ENCODE measurements at regions of chr7 and their contacts with region 1.

Region 1: GRCh38 chr7:120709972-120710320 is 148.0 kb downstream of the TSPAN12 start:
- DNase-seq: no peak
- ATAC-seq: no peak
- H3K4me3 ChIP-seq: no peak overlapping the region
- H3K27ac ChIP-seq: no peak overlapping the region
- H3K4me1 ChIP-seq: no peaks in the 10 kb centered on the region
- H3K27me3 ChIP-seq: no peaks in the 10 kb centered on the region
- CTCF ChIP-seq: no peak
- EP300 ChIP-seq: no peak
- POLR2A ChIP-seq: no peak
- RAD21 ChIP-seq: no peak

Region 2: DNA sequence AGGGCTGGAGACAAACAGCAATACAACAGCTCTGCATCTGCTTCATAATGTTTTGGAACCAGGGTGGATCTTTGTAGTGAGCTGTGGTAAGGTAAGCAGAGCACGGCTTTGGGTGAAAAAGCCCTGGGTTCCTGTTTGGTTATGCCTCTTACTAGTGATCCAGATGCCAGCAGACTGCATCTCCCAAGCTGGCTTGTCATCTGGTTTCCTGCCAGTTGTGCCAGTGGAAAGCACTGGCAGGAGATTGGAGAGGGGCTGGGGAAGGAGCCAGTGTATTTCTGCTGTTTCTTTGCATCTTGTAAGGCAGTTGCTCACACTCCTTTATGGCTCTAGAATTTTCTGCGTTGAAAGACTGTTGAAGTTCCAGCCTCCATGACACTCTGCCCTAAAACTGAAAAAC is 10.4 kb after region 1 on chr7:
- CTCF ChIA-PET with region 1: interaction called, 29 read pairs
- POLR2A ChIA-PET with region 1: no interaction called
- RAD21 ChIA-PET with region 1: interaction called, 3 read pairs
- SMC1A ChIA-PET with region 1: interaction called, 37 read pairs
- in situ Hi-C with region 1: no loop called
- intact Hi-C with region 1: no loop called
- DNase-seq: no peak
- ATAC-seq: no peak; the same call in 2 of the 3 replicates
- H3K4me3 ChIP-seq: no peak overlapping the region
- H3K27ac ChIP-seq: no peak overlapping the region
- H3K4me1 ChIP-seq: no peaks in the 10 kb centered on the region; the same call in 1 of the 2 replicates
- H3K27me3 ChIP-seq: no peaks in the 10 kb centered on the region
- CTCF ChIP-seq: no peak
- EP300 ChIP-seq: no peak
- POLR2A ChIP-seq: no peak
- RAD21 ChIP-seq: no peak

Region 3: DNA sequence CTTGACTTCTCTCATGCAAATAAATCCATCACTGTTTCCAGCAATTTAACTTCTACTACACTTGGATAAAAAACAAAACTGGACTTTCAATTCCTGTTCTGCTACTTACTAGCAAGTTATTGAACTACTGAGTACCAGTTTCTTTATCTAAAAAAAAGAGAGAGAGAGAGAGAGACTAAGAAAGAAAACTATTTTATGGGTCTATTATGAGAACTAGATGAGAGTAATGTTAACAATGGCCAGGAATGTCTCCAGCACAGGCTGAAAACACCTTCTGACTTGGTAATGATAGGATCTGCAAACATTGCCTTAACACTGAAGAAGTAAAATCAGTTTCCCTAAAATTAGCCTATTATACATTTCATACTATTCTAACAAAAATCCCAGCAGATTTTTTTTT is 142.8 kb after region 1 on chr7:
- CTCF ChIA-PET with region 1: no interaction called
- POLR2A ChIA-PET with region 1: no interaction called
- RAD21 ChIA-PET with region 1: no interaction called
- SMC1A ChIA-PET with region 1: no interaction called
- in situ Hi-C with region 1: no loop called
- intact Hi-C with region 1: no loop called
- DNase-seq: no peak
- ATAC-seq: no peak
- H3K4me3 ChIP-seq: no peak overlapping the region
- H3K27ac ChIP-seq: no peak overlapping the region
- H3K4me1 ChIP-seq: no peaks in the 10 kb centered on the region
- H3K27me3 ChIP-seq: no peaks in the 10 kb centered on the region
- CTCF ChIP-seq: no peak
- EP300 ChIP-seq: no peak
- POLR2A ChIP-seq: no peak
- RAD21 ChIP-seq: no peak

Region 4: DNA sequence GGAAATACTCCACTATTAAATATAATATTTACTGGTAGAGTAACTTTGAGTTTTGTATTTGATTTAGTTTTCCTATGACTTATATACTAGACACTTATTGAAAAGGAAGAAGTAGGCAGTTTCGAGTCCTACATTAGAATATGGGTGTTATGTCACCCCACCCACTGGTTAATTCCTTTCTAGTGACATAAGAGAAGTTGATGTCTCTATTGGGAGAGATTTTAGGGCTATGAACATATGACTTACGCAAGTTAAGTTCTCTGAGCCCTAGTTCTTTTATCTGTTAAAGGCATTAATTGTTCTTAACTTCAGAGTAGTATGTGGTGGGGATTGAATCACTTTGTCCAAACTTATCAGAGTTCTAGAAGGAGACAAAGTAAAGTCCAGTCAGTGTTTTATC is 309.1 kb after region 1 on chr7:
- CTCF ChIA-PET with region 1: no interaction called
- POLR2A ChIA-PET with region 1: no interaction called
- RAD21 ChIA-PET with region 1: no interaction called
- SMC1A ChIA-PET with region 1: no interaction called
- in situ Hi-C with region 1: no loop called
- intact Hi-C with region 1: no loop called
- DNase-seq: no peak
- ATAC-seq: peak; percentile 60
- H3K4me3 ChIP-seq: no peak overlapping the region
- H3K27ac ChIP-seq: no peak overlapping the region
- H3K4me1 ChIP-seq: no peaks in the 10 kb centered on the region
- H3K27me3 ChIP-seq: no peaks in the 10 kb centered on the region
- CTCF ChIP-seq: no peak
- EP300 ChIP-seq: no peak
- POLR2A ChIP-seq: no peak
- RAD21 ChIP-seq: no peak

Measured in GM12878 (cell line).